ENCODE measurements at regions of chr17 and their contacts with region 1.

Region 1: DNA sequence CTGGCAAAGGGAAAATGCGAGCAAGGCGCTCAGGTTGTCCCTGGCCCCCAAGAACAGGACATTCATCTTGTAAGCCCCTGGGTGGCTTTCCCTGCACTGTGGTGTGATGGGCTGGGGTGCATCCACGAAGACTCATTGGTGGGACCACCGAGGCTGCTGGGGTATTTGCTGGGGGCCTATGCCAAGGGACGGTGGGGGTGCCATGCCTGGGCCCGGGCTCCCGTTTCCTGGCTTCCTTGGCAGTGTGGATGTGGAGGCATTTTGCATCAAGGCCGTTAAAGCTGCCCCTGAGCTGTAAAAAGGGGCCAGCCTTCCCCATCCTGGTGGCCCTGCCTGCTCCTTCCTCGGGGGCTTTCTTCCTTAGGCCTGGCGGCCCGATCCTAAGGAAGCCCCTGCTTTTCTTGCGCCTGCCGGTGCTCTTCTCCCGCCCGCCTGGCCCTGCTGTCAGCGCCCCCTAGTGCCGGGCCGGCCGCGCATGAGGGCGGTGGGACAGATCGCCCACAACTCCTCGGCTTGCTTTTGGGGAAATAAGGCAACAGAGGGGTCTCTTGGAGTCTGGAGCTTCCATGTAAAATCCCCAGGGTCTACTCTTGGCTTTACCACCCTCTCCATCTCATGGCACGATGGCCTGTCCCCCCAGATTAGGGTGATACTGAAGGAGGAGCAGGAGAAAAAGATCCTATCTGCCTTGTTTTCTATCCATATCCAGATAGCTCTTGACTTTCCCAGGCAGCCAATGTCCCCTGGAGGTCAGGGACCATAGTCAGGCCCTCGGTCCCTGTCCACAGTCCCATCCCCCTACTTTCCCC is 9.8 kb upstream of the TBX2 start:
- DNase-seq: no peak
- H3K4me3 ChIP-seq: no peak overlapping the region
- H3K27ac ChIP-seq: no peak overlapping the region
- H3K4me1 ChIP-seq: peaks cover 0 to 10% (median 5%) of the 10 kb centered on the region in 4 donors
- H3K27me3 ChIP-seq: peaks cover 0 to 30% (median 13%) of the 10 kb centered on the region in 3 donors
- CTCF ChIP-seq: peak; percentile 49 to 72 (median 61)
- EP300 ChIP-seq: no peak
- POLR2A ChIP-seq: no peak

Region 2: GRCh38 chr17:61002316-61002736 is 387.5 kb before region 1 on chr17:
- intact Hi-C with region 1: loop called (anchors 10 kb)
- DNase-seq: no peak
- H3K4me3 ChIP-seq: no peak overlapping the region
- H3K27ac ChIP-seq: no peak overlapping the region
- H3K4me1 ChIP-seq: no peaks in the 10 kb centered on the region
- H3K27me3 ChIP-seq: no peaks in the 10 kb centered on the region
- CTCF ChIP-seq: peak in 1 of 4 experiments; percentile 14
- EP300 ChIP-seq: no peak
- POLR2A ChIP-seq: no peak

Region 3: GRCh38 chr17:61338000-61338798 is 51.7 kb before region 1 on chr17:
- intact Hi-C with region 1: loop called (anchors 10 kb)
- DNase-seq: no peak
- H3K4me3 ChIP-seq: no peak overlapping the region
- H3K27ac ChIP-seq: peak overlapping the region in 2 of 4 donors; percentile 2 to 79
- H3K4me1 ChIP-seq: peaks cover 0 to 15% (median 14%) of the 10 kb centered on the region in 4 donors
- H3K27me3 ChIP-seq: peaks cover 0 to 3% (median 0%) of the 10 kb centered on the region in 3 donors
- CTCF ChIP-seq: no peak
- EP300 ChIP-seq: no peak
- POLR2A ChIP-seq: no peak